ENCODE measurements at regions of chr1 and their contacts with region 1.

Region 1: DNA sequence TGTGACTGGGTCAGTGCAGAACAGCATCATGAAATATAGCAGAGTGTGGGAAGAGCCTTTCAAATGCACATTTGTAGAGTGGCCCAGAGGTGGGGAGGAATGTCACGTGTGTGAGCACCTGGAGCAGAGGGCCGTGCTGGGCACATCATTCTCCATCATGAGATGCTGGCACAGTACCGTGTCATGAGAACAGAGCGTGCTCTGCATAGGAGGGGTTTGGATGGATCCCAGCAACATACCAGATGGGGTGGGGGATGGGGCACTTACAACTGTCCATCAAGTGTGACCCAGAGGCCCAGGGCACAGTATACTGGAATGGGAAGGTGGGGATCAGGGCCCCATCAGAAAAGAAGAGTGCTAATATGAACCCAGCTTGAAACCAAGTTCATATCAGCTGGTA is 182.0 kb downstream of the LMX1A start:
- DNase-seq: no peak
- H3K4me3 Mint-ChIP-seq: no peak overlapping the region
- H3K27ac Mint-ChIP-seq: no peak overlapping the region
- H3K4me1 Mint-ChIP-seq: no peaks in the 10 kb centered on the region
- H3K27me3 Mint-ChIP-seq: no peaks in the 10 kb centered on the region
- CTCF ChIP-seq: no peak

Region 2: DNA sequence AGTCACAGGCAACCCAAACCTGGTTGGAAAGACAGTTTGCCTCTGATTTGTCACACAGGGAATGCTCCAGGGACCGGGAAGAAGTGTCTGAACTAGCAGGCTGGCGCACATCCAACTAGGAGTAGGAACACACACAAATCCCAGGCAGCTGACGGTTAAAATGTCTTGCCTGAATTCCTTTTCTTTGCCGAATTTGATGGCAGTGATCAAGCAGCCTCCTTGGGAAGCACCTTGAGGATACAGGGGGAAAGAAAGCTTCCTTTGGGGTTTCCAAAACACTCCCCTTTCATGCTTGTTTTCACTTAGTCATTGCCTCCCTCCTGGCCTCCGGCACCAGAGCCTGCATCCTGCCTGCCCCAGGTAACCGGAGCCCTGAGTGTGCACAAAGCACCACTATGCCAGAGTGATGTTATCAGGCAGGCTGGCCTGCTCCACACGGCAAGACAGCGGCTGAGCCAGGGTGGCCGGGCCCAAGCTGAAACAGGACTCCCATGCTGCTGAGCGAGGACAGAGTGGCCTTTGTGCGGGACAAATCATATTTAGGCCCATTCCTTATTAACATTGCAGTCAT is 11.7 kb before region 1 on chr1:
- CTCF ChIA-PET with region 1: interaction called, 10 read pairs
- POLR2A ChIA-PET with region 1: interaction called, 14 read pairs
- intact Hi-C with region 1: no loop called
- DNase-seq: peak; percentile 81
- H3K4me3 Mint-ChIP-seq: no peak overlapping the region
- H3K27ac Mint-ChIP-seq: no peak overlapping the region
- H3K4me1 Mint-ChIP-seq: no peaks in the 10 kb centered on the region
- H3K27me3 Mint-ChIP-seq: peaks cover 14% of the 10 kb centered on the region
- CTCF ChIP-seq: no peak

Region 3: DNA sequence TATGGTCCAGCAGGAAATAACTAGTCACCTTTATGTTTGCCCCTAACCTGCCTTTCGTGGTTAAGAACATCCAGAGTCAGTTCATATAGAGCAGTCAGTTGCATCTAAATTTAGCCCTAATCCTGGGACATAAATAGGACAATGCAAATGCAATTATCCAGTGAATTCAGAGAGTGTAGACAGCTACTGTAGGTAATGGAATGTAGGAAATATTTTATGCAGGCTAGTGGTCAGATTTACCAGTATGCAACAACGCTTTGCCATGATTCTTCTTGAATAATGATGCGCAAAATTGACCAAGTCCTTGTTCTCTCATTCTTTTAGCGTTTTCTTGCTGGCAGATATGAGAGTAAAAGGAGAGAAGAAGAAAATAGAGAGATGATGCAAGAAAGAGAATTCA is 16.6 kb after region 1 on chr1:
- CTCF ChIA-PET with region 1: no interaction called
- POLR2A ChIA-PET with region 1: no interaction called
- intact Hi-C with region 1: no loop called
- DNase-seq: no peak
- H3K4me3 Mint-ChIP-seq: no peak overlapping the region
- H3K27ac Mint-ChIP-seq: no peak overlapping the region
- H3K4me1 Mint-ChIP-seq: no peaks in the 10 kb centered on the region
- H3K27me3 Mint-ChIP-seq: no peaks in the 10 kb centered on the region
- CTCF ChIP-seq: no peak